ENCODE measurements at regions of chr10 and their contacts with region 1.

Region 1: DNA sequence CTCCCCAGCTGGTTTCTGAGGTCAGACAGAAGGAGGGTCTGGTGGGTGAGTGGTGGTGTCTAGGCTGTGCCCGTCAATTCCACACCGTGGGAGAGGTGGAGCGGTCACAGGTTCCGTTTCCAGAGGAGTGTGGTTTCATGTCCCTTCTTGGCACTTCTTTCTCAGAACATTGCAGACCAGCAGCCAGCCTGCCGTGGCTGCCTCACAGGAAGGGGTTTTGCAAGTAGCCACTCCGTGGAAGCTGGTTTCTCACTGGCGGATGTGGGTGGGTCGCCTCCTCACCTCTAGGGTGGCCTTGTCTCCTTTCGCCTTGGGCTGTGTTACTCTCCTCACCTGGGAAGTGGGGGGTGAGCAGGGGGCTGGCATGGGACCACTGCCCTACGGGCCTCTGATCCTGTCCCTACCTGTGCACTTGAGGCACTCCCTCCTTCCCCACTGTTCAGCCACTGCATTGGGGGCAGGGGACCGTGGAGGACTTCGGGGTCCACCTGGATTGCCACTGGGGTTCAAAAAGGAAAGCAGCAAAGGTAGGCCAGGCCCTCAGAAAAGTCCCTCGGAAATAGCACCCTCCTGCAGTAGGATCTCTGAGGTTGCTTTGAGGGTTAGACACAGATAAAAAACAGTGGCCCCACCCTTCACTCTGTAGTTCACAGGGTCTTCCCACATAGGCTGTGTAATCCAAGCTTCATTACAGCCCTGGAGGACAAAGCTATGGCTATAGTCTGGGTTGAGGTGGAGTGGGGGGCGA is 33.9 kb downstream of the TSPAN14 start:
- DNase-seq: peak in 13 of 14 experiments; percentile 43 to 88 (median 58)
- ATAC-seq: peak; percentile 62
- H3K4me3 ChIP-seq: peak overlapping the region; percentile 37
- H3K4me3 Mint-ChIP-seq: peak overlapping the region; percentile 56
- H3K27ac ChIP-seq: peak overlapping the region; percentile 81 to 84
- H3K27ac Mint-ChIP-seq: peak overlapping the region; percentile 78
- H3K4me1 ChIP-seq: peaks cover 98% of the 10 kb centered on the region
- H3K4me1 Mint-ChIP-seq: peaks cover 99% of the 10 kb centered on the region
- H3K27me3 ChIP-seq: no peaks in the 10 kb centered on the region
- H3K27me3 Mint-ChIP-seq: no peaks in the 10 kb centered on the region
- CTCF ChIP-seq: no peak

Region 2: DNA sequence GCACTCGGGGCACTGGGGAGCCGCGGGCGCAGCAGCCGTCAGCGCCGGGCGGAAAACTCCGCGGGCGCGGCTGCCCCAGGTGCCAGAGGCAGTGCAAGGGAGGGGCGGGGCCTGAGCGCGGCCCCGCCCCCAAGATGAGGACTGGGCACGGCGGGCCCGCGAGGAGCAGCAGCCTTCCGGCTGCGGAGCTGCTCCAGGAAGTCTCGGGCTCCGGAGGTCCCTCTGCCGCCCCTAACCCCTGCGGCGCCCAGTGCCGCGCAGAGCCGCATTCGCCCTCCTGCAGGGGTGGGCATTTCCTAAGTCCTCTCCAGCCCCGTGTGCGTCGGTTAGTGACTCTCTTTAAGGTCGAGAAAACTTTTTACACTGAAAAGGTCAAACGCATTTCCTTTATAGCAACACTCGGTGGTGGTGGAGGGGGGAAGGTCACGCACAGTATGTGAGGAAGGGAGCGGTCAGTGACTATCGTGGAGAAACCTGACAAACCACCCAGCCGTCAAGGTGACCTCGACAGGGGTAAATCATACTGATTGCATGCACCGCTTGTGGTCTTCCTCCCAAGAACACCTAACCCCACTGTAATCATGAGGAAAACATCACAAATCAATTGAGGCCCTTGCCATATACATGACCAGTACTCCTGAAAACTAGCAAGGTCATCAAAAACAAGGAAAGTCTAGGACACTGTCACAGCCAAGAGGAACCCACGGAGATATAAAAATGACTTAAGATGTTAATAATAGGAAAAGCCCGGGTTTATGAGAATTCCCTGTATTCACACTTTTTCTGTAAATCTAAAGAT is 282.3 kb before region 1 on chr10 and contains the start of gene ANXA11:
- CTCF ChIA-PET with region 1: no interaction called
- POLR2A ChIA-PET with region 1: no interaction called
- intact Hi-C with region 1: loop called in 1 of 2 experiments (anchors 10 kb)
- DNase-seq: peak; percentile 72 to 94 (median 88)
- ATAC-seq: peak; percentile 79
- H3K4me3 ChIP-seq: peak within 1 kb of the TSS; percentile 86
- H3K4me3 Mint-ChIP-seq: peak within 1 kb of the TSS; percentile 90
- H3K27ac ChIP-seq: peak within 1 kb of the TSS; percentile 72 to 86
- H3K27ac Mint-ChIP-seq: peak within 1 kb of the TSS; percentile 96
- H3K4me1 ChIP-seq: peaks cover 53% of the 10 kb centered on the region
- H3K4me1 Mint-ChIP-seq: peaks cover 56% of the 10 kb centered on the region
- H3K27me3 ChIP-seq: no peaks in the 10 kb centered on the region
- H3K27me3 Mint-ChIP-seq: no peaks in the 10 kb centered on the region
- CTCF ChIP-seq: no peak
- total RNA-seq, gene ANXA11: 153 to 159 TPM

Region 3: GRCh38 chr10:80453701-80454513 is 34.1 kb before region 1 on chr10 and contains the start of gene TSPAN14:
- CTCF ChIA-PET with region 1: interaction called, 5 read pairs
- POLR2A ChIA-PET with region 1: interaction called, 420 read pairs
- intact Hi-C with region 1: loop called (anchors 2 to 5 kb)
- DNase-seq: peak; percentile 50 to 90 (median 76)
- ATAC-seq: peak; percentile 61
- H3K4me3 ChIP-seq: peak within 1 kb of the TSS; percentile 97
- H3K4me3 Mint-ChIP-seq: peak within 1 kb of the TSS; percentile 95
- H3K27ac ChIP-seq: peak within 1 kb of the TSS; percentile 67 to 80
- H3K27ac Mint-ChIP-seq: peak within 1 kb of the TSS; percentile 92
- H3K4me1 ChIP-seq: peaks cover 47% of the 10 kb centered on the region
- H3K4me1 Mint-ChIP-seq: peaks cover 36% of the 10 kb centered on the region
- H3K27me3 ChIP-seq: no peaks in the 10 kb centered on the region
- H3K27me3 Mint-ChIP-seq: no peaks in the 10 kb centered on the region
- CTCF ChIP-seq: no peak
- total RNA-seq, gene TSPAN14: 167 to 168 TPM

Region 4: GRCh38 chr10:80464557-80465450 is 23.2 kb before region 1 on chr10:
- CTCF ChIA-PET with region 1: interaction called, 13 read pairs
- POLR2A ChIA-PET with region 1: interaction called, 420 read pairs
- intact Hi-C with region 1: loop called (anchors 2 kb)
- DNase-seq: peak in 6 of 14 experiments; percentile 21 to 58 (median 47)
- ATAC-seq: no peak
- H3K4me3 ChIP-seq: peak overlapping the region; percentile 49
- H3K4me3 Mint-ChIP-seq: peak overlapping the region; percentile 85
- H3K27ac ChIP-seq: peak overlapping the region; percentile 85 to 91
- H3K27ac Mint-ChIP-seq: peak overlapping the region; percentile 92
- H3K4me1 ChIP-seq: peaks cover 100% of the 10 kb centered on the region
- H3K4me1 Mint-ChIP-seq: peaks cover 97% of the 10 kb centered on the region
- H3K27me3 ChIP-seq: no peaks in the 10 kb centered on the region
- H3K27me3 Mint-ChIP-seq: no peaks in the 10 kb centered on the region
- CTCF ChIP-seq: no peak

Region 5: GRCh38 chr10:80472234-80473095 is 15.5 kb before region 1 on chr10:
- CTCF ChIA-PET with region 1: interaction called, 13 read pairs
- POLR2A ChIA-PET with region 1: interaction called, 420 read pairs
- intact Hi-C with region 1: loop called (anchors 2 kb)
- DNase-seq: peak in 3 of 14 experiments; percentile 65 to 77 (median 75)
- ATAC-seq: peak; percentile 65
- H3K4me3 ChIP-seq: peak overlapping the region; percentile 23
- H3K4me3 Mint-ChIP-seq: peak overlapping the region; percentile 84
- H3K27ac ChIP-seq: peak overlapping the region; percentile 46 to 48
- H3K27ac Mint-ChIP-seq: peak overlapping the region; percentile 92
- H3K4me1 ChIP-seq: peaks cover 98% of the 10 kb centered on the region
- H3K4me1 Mint-ChIP-seq: peaks cover 93% of the 10 kb centered on the region
- H3K27me3 ChIP-seq: no peaks in the 10 kb centered on the region
- H3K27me3 Mint-ChIP-seq: no peaks in the 10 kb centered on the region
- CTCF ChIP-seq: no peak

Region 6: DNA sequence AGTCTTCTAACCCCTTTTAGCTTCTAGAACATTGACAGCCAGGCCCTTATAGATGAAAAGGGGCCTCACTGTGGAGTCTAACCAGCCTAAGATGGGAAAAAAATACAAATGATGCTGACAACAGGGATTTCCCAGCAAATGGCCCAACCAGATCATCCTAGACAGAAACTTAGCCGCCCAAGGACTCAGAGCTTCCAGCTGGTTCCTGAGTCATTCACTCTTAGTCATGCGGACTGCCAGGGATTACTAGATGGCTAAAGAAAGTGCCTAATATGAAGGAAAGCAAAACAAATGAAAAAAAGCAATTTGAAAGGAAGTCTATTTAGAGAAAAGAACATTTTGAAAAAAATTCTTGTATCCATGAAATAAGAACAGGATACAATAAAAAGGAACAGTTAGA is 10.2 kb before region 1 on chr10:
- CTCF ChIA-PET with region 1: interaction called, 4 read pairs
- POLR2A ChIA-PET with region 1: interaction called, 420 read pairs
- intact Hi-C with region 1: no loop called
- DNase-seq: peak in 1 of 14 experiments; percentile 59
- ATAC-seq: no peak
- H3K4me3 ChIP-seq: no peak overlapping the region
- H3K4me3 Mint-ChIP-seq: peak overlapping the region; percentile 49
- H3K27ac ChIP-seq: no peak overlapping the region
- H3K27ac Mint-ChIP-seq: peak overlapping the region; percentile 92
- H3K4me1 ChIP-seq: peaks cover 73% of the 10 kb centered on the region
- H3K4me1 Mint-ChIP-seq: peaks cover 84% of the 10 kb centered on the region
- H3K27me3 ChIP-seq: no peaks in the 10 kb centered on the region
- H3K27me3 Mint-ChIP-seq: no peaks in the 10 kb centered on the region
- CTCF ChIP-seq: no peak

Region 7: GRCh38 chr10:80498833-80499741 is 11.1 kb after region 1 on chr10:
- CTCF ChIA-PET with region 1: interaction called, 5 read pairs
- POLR2A ChIA-PET with region 1: interaction called, 158 read pairs
- intact Hi-C with region 1: loop called in 1 of 2 experiments (anchors 2 kb)
- DNase-seq: peak in 9 of 14 experiments; percentile 31 to 77 (median 49)
- ATAC-seq: peak; percentile 30
- H3K4me3 ChIP-seq: peak overlapping the region; percentile 10
- H3K4me3 Mint-ChIP-seq: peak overlapping the region; percentile 83
- H3K27ac ChIP-seq: peak overlapping the region; percentile 49 to 54
- H3K27ac Mint-ChIP-seq: peak overlapping the region; percentile 78
- H3K4me1 ChIP-seq: peaks cover 89% of the 10 kb centered on the region
- H3K4me1 Mint-ChIP-seq: peaks cover 100% of the 10 kb centered on the region
- H3K27me3 ChIP-seq: no peaks in the 10 kb centered on the region
- H3K27me3 Mint-ChIP-seq: no peaks in the 10 kb centered on the region
- CTCF ChIP-seq: no peak

Region 8: GRCh38 chr10:80609331-80609730 is 121.4 kb after region 1 on chr10:
- CTCF ChIA-PET with region 1: no interaction called
- POLR2A ChIA-PET with region 1: no interaction called
- intact Hi-C with region 1: no loop called
- DNase-seq: no peak
- ATAC-seq: no peak
- H3K4me3 ChIP-seq: no peak overlapping the region
- H3K4me3 Mint-ChIP-seq: no peak overlapping the region
- H3K27ac ChIP-seq: no peak overlapping the region
- H3K27ac Mint-ChIP-seq: no peak overlapping the region
- H3K4me1 ChIP-seq: no peaks in the 10 kb centered on the region
- H3K4me1 Mint-ChIP-seq: peaks cover 7% of the 10 kb centered on the region
- H3K27me3 ChIP-seq: no peaks in the 10 kb centered on the region
- H3K27me3 Mint-ChIP-seq: no peaks in the 10 kb centered on the region
- CTCF ChIP-seq: no peak